HEK293 (cell line): ENCODE measurements at regions of chr6 and their contacts with region 1.

Region 1: DNA sequence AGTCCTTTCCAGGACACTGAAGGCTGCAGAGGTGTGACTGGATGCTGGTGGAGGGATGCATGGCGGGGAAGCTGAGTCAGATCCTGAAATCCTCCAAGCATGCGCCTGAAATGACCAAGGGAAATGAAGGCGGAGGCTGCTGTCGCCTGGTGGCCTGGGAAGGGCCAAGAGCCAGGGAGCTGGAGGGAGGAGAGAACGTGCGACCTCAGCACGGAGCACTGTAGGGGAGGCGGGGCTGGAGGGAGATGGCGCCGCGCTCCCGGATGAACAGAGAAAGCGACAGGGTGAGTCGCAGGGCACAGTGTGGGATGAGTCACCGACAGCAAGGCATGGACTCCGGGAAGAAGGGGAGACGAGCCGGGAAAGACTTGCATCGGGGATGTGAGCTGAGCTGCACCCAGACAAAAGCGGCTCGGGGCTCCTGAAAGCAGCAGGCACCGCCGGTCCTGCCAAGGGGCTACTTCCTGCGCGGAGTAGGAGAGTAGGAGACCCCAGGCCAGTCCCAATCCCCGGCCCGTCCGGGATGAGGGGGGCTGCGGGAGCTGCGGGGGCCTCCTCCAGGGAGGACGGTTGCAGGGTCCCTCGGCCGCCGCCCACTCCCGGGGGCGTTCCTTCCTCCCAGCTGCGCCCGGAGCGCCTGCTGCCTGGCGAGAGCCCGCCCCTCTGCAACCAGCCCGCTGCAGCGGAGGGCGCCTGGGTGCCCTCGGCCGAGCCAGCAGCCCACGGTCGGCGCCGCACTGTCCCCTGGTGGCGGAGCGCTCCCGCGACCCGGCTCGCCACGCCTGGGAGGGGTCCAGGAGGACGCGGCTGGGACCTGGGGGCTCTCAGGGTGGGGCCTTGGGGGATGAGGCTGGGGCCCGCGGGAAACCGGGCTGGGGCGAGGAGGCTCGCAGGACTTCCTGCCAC is 11.0 kb upstream of the NQO2 start:
- H3K4me3 ChIP-seq: peak overlapping the region; percentile 62
- H3K27ac ChIP-seq: peak overlapping the region; percentile 90
- H3K4me1 ChIP-seq: peaks cover 26% of the 10 kb centered on the region
- CTCF ChIP-seq: peak; percentile 77; the same call in 1 of the 2 replicates

Region 2: DNA sequence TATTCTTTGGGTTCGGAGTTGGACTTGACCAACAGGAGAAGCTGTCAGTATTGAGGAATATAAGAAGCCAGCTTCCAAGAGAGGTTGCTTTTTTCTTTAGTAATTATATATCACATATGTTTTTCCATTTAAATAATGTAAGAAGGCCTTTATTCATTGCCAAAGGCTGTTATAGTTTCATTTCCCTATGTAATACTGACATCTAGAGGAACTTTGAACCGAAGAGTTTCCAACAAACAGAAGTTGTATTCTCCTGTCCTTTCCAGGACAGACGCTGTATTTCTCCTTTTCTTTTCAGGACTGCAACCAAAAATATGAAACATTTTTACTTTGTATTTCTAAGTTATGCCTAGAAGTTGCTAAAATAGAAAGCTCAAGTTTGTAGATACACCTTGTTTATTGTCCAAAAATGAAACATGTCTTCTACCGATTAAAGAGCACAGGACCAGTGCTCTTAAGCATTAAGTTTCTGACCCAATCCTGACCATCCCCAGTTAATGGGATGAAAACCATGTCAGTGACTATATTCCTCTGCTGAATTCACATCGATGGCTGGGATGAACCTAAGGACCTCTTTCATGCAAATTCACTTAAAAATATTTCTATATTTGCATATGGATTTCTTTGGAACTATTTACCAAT is 293.1 kb before region 1 on chr6:
- CTCF ChIA-PET with region 1: no interaction called
- POLR2A ChIA-PET with region 1: no interaction called
- H3K4me3 ChIP-seq: no peak overlapping the region
- H3K27ac ChIP-seq: no peak overlapping the region
- H3K4me1 ChIP-seq: no peaks in the 10 kb centered on the region
- CTCF ChIP-seq: peak; percentile 52; the same call in 1 of the 2 replicates

Region 3: DNA sequence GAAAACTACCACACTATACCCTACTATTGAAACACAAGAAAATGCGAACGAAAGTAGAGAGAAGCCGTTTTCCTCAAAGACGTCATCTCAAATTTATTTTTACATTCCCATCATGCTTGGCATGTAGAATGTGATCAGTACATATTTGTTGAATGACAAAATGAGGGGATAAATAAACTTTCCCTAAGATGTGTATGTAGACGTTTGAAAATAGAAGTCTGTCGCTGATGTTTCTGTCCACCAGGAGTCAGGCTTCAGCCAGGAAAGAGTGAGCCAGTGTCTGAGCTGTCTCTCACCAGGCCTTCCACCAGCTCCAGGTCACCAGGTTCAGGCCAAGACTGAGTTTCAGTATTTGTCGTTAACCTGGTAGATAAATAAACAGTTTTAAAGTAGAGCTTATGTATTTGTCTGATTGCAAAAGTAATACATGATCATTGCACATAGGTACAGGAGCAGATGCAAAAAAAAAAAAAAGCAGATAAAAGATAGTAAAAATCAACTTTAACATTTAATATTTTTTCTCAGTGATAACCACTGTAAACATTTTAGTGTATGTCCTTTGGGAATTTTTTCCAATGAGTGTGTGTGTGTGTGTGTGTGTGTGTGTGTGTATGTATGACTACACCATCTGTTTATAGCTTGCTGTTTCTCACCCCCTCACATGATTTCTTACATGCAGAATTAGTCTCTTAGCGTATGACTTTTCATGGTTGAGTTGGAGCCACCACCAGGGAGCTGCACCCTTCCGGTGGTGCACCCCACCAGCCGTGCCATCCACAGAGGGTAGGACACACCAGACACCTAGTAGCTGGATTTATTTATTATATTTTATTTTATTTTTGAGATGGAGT is 197.3 kb before region 1 on chr6:
- CTCF ChIA-PET with region 1: interaction called, 41 read pairs
- POLR2A ChIA-PET with region 1: interaction called, 5 read pairs
- H3K4me3 ChIP-seq: no peak overlapping the region
- H3K27ac ChIP-seq: no peak overlapping the region
- H3K4me1 ChIP-seq: no peaks in the 10 kb centered on the region
- CTCF ChIP-seq: peak; percentile 59; the same call in 1 of the 2 replicates

Region 4: DNA sequence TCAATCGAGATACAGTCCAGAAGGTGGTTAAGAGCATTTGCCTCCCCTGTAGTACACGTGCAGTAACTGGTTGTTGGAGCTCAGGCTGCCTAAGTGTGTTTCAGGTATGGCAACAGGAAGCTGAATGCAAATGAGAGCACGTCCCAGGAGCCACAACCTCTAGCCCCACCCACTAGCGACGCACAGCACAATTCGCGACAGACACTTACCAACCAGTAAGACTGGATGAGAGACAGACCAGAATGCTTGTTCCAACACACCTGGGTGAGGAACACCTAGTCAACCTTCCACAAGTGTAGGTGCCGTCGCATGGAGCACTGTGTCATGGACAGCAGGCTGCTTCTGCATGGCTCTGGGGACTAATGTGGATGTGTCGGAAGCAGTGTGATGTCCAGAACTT is 139.8 kb before region 1 on chr6:
- CTCF ChIA-PET with region 1: interaction called, 72 read pairs
- POLR2A ChIA-PET with region 1: interaction called, 37 read pairs
- H3K4me3 ChIP-seq: no peak overlapping the region
- H3K27ac ChIP-seq: no peak overlapping the region
- H3K4me1 ChIP-seq: peaks cover 6% of the 10 kb centered on the region; the same call in 1 of the 2 replicates
- CTCF ChIP-seq: no peak

Region 5: DNA sequence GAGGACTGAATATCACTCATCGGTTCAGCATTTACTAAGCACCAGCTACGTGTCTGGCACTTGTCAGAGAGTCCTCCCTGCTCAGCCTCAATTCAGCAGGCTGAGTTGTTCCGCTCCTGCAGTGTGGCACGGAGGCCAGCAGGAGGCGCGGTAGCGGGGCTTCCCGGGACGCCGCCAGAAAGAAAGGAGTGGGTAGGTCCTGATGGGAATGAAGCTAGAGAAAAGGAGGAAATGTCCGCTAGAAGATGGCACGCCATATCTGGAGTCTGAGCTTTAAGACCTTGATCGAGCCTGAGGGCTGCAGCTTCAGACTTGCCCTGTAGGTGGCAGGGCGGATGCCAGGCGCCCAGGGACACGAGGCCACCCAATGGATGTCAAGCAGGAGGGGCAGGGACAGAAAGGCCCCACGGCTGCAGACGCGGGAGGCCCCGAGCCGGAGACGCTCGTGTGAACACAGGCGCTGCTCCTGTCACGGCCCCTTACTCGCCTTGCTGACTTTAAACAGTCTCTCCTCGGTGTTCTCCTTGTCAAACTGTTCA is 36.1 kb before region 1 on chr6:
- CTCF ChIA-PET with region 1: interaction called, 58 read pairs
- POLR2A ChIA-PET with region 1: interaction called, 11 read pairs
- H3K4me3 ChIP-seq: no peak overlapping the region
- H3K27ac ChIP-seq: no peak overlapping the region
- H3K4me1 ChIP-seq: no peaks in the 10 kb centered on the region
- CTCF ChIP-seq: peak; percentile 74

Region 6: DNA sequence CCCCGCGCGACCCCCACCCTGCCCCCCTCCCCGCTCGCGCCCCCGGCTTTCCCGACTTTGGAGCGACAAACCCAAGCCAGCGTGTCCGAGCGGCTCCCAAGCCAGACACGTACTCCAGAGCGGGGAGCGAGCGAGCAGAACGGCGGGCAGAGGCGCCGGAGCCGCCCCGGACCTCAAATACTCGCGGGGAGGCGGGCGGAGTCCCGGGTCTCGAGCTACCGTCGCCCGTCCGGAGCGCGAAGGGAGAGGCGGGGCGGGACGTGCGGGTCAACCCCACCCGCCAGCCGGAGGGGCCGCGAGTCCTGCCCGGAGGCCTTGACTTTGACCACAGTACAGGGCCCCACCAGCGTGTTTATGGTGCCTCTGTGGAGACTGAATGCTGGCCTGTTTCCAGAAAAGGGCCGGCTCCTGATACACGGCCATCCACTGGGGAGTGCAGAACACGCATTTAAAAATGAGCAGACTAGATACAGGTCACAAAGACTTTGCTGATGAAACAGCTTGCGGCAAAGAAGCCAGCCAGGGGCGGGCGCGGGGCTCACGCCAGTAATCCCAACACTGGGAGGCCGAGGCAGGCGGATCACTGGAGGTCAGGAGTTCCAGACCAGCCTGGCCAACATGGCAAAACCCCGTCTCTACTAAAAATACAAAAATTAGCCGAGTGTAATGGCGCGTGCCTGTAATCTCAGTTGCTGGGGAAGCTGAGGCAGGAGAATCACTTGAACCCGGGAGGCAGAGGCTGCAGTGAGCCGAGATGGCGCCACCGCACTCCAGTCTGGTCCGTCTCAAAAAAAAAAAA is 17.1 kb before region 1 on chr6 and contains the start of gene SERPINB6:
- CTCF ChIA-PET with region 1: interaction called, 22 read pairs
- POLR2A ChIA-PET with region 1: interaction called, 25 read pairs
- H3K4me3 ChIP-seq: peak within 1 kb of the TSS; percentile 70
- H3K27ac ChIP-seq: peak within 1 kb of the TSS; percentile 90
- H3K4me1 ChIP-seq: peaks cover 6% of the 10 kb centered on the region
- CTCF ChIP-seq: peak; percentile 47

Region 7: DNA sequence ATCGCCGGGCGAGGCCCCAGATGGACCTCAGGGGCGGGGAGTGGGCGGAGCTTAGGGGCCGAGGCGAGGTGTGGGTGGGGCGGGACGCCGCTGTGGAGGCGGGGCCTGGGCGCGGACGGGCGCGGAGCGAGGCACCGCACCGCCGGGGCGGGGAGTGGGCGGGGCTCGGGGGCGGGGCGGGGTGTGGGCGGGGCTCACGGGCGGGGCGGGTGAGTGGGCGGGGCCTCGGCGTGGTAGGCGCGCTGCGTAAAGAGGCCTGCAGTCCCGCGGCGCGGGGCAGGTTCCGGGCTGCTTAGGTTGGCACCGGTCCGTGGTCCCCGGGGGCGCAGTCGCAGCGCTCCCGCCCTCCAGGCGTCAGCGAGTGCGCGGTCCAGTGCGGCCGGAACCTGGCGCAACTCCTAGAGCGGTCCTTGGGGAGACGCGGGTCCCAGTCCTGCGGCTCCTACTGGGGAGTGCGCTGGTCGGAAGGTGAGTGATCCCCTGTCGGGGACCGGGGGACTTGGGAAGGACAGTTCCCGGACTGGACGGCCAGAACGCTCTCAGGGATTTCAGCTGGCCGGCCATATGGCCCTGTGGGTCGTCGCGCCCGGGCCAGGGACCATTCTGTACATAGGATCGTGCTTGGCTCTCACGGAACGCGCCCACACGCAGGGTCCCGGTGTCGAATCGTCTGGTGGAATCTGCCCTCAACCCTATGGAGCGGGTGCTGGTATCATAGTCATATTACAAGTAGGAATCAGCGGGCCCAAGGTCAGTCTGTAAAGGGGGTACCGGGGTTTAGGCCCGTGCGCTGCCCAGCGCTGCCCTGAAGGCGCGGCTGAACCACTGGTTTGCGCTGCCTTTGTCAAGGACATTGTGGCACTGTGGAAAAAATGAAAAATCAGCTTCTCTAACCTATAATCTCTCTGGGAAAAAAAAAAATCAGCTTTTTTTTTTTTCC is 11.2 kb after region 1 on chr6 and contains the start of gene NQO2:
- CTCF ChIA-PET with region 1: interaction called, 26 read pairs
- POLR2A ChIA-PET with region 1: interaction called, 14 read pairs
- H3K4me3 ChIP-seq: peak within 1 kb of the TSS; percentile 79
- H3K27ac ChIP-seq: peak within 1 kb of the TSS; percentile 63; the same call in 1 of the 2 replicates
- H3K4me1 ChIP-seq: no peaks in the 10 kb centered on the region
- CTCF ChIP-seq: peak; percentile 70

Region 8: DNA sequence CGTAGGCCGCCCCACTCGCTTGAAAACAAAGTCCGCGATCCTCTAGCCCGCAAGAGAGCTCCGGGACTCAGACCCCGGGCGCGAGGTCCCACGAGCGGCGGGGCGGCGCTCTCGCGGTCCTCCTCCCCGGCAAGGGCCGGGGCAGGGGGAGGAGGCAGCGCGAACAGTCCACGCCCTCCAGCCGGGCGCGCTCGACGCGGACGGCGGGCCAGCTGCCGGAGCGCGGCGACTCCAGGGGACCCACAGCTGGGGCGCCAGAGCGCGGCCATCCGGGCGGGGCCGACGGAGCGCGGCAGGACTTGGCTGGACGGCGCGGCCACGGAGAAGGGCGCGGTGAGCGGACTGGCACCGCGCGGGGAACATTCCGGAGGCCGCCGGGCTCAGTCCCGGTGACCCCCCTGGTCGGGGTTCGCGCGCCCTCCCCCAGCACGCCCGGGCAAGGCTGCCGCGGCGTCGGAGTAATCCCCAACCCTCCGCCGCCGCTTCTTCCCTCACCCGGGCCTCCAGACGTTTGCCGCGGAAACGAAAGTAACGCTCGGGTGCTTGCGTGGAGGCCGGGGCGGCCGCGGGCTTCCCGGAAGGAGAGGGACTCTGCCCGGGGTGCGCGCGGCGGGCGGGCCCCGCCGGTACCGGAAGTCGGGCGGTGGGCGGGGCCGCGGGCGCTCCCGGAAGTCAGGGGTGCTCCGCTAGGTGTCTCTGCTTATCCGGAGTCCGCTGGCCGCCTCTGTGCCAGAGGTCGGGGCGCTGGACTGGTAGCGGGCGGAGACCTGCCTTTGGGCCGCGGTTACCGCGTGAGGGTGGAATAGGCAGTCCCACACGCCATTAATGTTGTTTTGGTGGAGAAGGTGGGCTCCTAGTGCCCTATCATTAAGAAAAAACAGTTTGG is 79.9 kb after region 1 on chr6 and contains the start of gene RIPK1:
- CTCF ChIA-PET with region 1: no interaction called
- POLR2A ChIA-PET with region 1: interaction called, 15 read pairs
- H3K4me3 ChIP-seq: peak within 1 kb of the TSS; percentile 73
- H3K27ac ChIP-seq: peak within 1 kb of the TSS; percentile 94
- H3K4me1 ChIP-seq: peaks cover 5% of the 10 kb centered on the region; the same call in 1 of the 2 replicates
- CTCF ChIP-seq: peak; percentile 85